PC-3 (cell line): ENCODE measurements at regions of chr17 and their contacts with region 1.

Region 1: GRCh38 chr17:36514856-36515255 is 19.8 kb downstream of the MYO19 start:
- DNase-seq: no peak
- ATAC-seq: no peak
- H3K4me3 ChIP-seq: no peak overlapping the region
- H3K27ac ChIP-seq: no peak overlapping the region
- H3K4me1 ChIP-seq: no peaks in the 10 kb centered on the region
- H3K27me3 ChIP-seq: no peaks in the 10 kb centered on the region
- CTCF ChIP-seq: no peak

Region 2: DNA sequence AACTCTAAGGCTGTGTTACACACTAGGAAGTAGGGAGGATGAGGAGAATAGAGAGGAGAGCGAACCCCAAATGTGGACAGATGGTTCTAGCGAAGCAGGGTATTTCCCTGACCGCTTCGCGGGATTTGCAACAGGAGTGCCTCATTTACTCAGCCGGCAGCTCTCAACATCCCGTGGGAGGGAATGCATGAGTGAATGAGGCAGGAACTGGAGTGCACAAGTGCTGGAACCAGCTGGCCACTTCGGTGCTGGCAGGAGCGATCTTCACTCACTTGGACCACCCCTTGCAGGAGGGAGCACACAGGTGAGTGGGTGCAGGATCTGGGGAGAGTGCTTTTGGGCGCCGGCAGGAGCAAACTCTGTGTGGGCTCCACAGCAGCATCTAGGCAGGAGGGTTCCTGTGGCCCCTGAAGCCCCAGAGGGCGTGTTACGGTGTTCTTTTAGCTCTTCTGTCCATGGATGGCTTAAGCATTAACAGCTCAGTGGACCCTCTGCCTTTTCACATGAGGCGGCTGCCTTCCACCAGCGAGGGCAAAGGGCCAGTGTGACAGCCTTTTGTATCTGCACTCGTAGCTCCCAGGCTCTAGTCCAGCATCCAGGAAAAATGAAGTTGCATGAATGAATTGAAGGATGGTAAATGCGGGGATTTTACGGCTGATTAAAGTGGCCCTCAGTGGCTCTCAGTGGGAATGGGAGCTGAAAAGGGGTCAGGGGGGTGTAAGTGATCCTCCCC is 45.8 kb before region 1 on chr17:
- CTCF ChIA-PET with region 1: no interaction called
- POLR2A ChIA-PET with region 1: no interaction called
- intact Hi-C with region 1: no loop called
- DNase-seq: no peak
- ATAC-seq: no peak
- H3K4me3 ChIP-seq: no peak overlapping the region
- H3K27ac ChIP-seq: no peak overlapping the region
- H3K4me1 ChIP-seq: no peaks in the 10 kb centered on the region
- H3K27me3 ChIP-seq: peaks cover 33% of the 10 kb centered on the region
- CTCF ChIP-seq: no peak

Region 3: DNA sequence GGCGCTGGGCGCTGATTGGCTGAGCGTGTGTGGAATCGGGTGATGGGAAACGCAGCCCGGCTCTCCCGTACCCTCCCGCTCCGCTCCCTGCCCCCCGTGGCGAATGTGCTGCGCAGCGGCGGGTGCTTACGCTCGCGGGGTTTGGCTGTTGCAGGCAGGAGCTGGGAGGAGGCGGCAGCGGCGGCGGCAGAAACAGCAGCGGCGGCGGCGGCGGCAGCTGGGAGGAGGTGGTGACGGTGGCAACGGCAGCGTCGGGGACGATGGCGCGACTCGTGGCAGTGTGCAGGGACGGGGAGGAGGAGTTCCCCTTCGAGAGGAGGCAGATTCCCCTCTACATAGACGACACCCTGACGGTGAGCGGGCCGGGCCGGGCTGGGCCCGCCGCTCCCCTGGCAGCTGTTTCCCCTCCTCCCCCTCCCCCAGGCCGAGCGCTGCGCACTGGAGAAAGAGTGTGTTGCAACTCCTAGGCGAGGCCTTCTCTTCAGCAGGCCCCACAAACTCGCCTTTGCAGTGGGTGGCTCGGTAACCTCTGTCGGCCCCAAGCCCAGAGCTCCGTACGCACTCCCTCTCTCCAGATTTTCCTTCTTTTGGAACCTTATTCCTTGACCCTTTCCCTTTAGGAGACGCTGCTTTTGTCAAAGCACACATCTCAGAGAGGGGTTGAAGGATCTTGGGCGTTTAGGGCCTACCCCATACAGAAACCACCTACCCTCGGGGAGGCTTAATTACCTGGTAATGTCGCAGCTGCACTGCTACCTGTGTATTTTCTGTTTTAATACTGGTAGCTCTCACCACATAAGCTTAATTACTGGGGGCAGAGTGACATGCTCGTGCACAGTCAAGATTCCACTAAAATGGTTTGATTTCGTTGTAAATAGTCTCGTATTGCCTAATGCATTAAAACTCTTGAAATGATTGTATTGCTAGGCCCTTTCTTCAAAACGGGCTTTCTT is 30.9 kb after region 1 on chr17:
- CTCF ChIA-PET with region 1: no interaction called
- POLR2A ChIA-PET with region 1: interaction called, 22 read pairs
- intact Hi-C with region 1: no loop called
- DNase-seq: peak; percentile 93
- ATAC-seq: peak; percentile 78
- H3K4me3 ChIP-seq: peak overlapping the region; percentile 99
- H3K27ac ChIP-seq: peak overlapping the region; percentile 62
- H3K4me1 ChIP-seq: peaks cover 9% of the 10 kb centered on the region
- H3K27me3 ChIP-seq: no peaks in the 10 kb centered on the region
- CTCF ChIP-seq: no peak

Region 4: DNA sequence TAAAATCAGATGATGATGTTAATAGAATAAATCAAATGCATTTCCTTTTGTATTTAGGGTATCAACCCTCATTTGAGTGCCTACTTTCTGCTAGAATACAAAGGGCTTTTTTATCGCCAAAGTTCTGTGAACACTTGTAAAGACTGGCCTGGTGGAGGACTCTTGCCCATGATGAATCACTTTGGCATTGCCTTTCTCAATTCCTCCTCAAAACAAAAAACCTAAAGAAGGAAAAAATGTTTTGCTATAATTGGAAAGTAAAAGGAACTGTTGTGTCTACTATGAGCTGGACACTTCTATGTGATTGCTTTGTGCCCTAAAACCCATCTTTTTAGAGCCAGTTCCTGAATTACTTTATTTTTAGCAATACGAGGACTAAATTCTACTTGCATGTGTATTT is 63.8 kb after region 1 on chr17:
- CTCF ChIA-PET with region 1: no interaction called
- POLR2A ChIA-PET with region 1: no interaction called
- intact Hi-C with region 1: no loop called
- DNase-seq: no peak
- ATAC-seq: no peak
- H3K4me3 ChIP-seq: no peak overlapping the region
- H3K27ac ChIP-seq: no peak overlapping the region
- H3K4me1 ChIP-seq: no peaks in the 10 kb centered on the region
- H3K27me3 ChIP-seq: no peaks in the 10 kb centered on the region
- CTCF ChIP-seq: no peak